ENCODE measurements at regions of chr14 and their contacts with region 1.

Region 1: GRCh38 chr14:28756884-28757570 is 9.6 kb upstream of the FOXG1 start:
- DNase-seq: no peak
- H3K4me3 ChIP-seq: no peak overlapping the region
- H3K27ac ChIP-seq: no peak overlapping the region
- H3K4me1 ChIP-seq: no peaks in the 10 kb centered on the region
- H3K27me3 ChIP-seq: peaks cover 83% of the 10 kb centered on the region
- CTCF ChIP-seq: peak; percentile 13 to 42 (median 20)
- POLR2A ChIP-seq: no peak

Region 2: GRCh38 chr14:28867571-28867970 is 110.5 kb after region 1 on chr14:
- intact Hi-C with region 1: no loop called
- DNase-seq: no peak
- H3K4me3 ChIP-seq: no peak overlapping the region
- H3K27ac ChIP-seq: no peak overlapping the region
- H3K4me1 ChIP-seq: no peaks in the 10 kb centered on the region
- H3K27me3 ChIP-seq: no peaks in the 10 kb centered on the region
- CTCF ChIP-seq: no peak
- POLR2A ChIP-seq: no peak

Region 3: DNA sequence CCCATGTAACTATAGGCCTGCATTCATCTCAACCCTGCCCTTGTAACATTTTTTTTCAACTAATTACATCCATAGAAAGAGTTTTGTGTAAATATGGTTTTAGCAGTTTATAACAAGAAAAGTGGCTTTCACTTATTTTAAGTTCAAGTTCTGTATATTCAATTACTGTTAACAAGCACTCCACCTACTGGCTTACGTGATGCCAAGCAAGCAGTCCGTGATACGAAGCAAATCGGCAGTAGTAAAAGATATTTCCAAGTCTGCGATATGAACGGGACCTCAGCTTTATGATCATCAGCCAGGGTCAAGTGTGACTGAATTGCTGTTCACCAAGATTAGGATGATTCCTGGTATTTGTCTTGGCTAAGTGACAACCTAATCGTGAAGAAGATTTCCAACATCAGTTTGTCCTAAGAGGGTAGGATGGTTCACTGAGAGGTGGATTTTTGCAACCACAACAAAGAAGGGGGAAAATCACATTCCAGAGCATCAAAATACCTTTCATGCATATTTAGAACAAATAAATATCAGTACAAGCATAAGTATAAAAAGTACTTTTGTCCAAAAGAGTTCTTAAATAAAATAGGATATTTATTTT is 465.7 kb after region 1 on chr14:
- intact Hi-C with region 1: loop called in 1 of 2 experiments (anchors 5 kb)
- DNase-seq: peak; percentile 13 to 49 (median 20)
- H3K4me3 ChIP-seq: no peak overlapping the region
- H3K27ac ChIP-seq: no peak overlapping the region
- H3K4me1 ChIP-seq: peaks cover 0 to 5% of the 10 kb centered on the region in 2 donors
- H3K27me3 ChIP-seq: no peaks in the 10 kb centered on the region
- CTCF ChIP-seq: peak; percentile 25 to 50 (median 40)
- POLR2A ChIP-seq: no peak